PC-9 (cell line): ENCODE measurements at regions of chr14 and their contacts with region 1.

Region 1: GRCh38 chr14:105537369-105538164 is 11.2 kb downstream of the TMEM121 start:
- DNase-seq: peak in 1 of 2 experiments; percentile 57
- H3K4me3 ChIP-seq: no peak overlapping the region
- H3K27ac ChIP-seq: no peak overlapping the region
- H3K4me1 ChIP-seq: no peaks in the 10 kb centered on the region
- H3K27me3 ChIP-seq: peaks cover 95% of the 10 kb centered on the region
- CTCF ChIP-seq: peak; percentile 96

Region 2: GRCh38 chr14:106163306-106163705 is 625.7 kb after region 1 on chr14:
- CTCF ChIA-PET with region 1: no interaction called
- POLR2A ChIA-PET with region 1: no interaction called
- intact Hi-C with region 1: loop called (anchors 10 kb)
- DNase-seq: no peak
- H3K4me3 ChIP-seq: no peak overlapping the region
- H3K27ac ChIP-seq: no peak overlapping the region
- H3K4me1 ChIP-seq: no peaks in the 10 kb centered on the region
- H3K27me3 ChIP-seq: peaks cover 10% of the 10 kb centered on the region; the same call in 1 of the 2 replicates
- CTCF ChIP-seq: no peak